CD4-positive, alpha-beta memory T cell (primary cell): ENCODE measurements at regions of chr10 and their contacts with region 1.

Region 1: GRCh38 chr10:93288654-93289634 is 193.2 kb downstream of the MYOF start:
- DNase-seq: peak; percentile 33 to 43 (median 41)
- H3K4me3 ChIP-seq: no peak overlapping the region
- H3K4me3 Mint-ChIP-seq: no peak overlapping the region
- H3K27ac ChIP-seq: no peak overlapping the region
- H3K27ac Mint-ChIP-seq: no peak overlapping the region
- H3K4me1 ChIP-seq: no peaks in the 10 kb centered on the region
- H3K4me1 Mint-ChIP-seq: no peaks in the 10 kb centered on the region
- H3K27me3 ChIP-seq: no peaks in the 10 kb centered on the region
- H3K27me3 Mint-ChIP-seq: no peaks in the 10 kb centered on the region

Region 2: GRCh38 chr10:92965314-92965713 is 323.6 kb before region 1 on chr10:
- CTCF ChIA-PET with region 1: no interaction called
- POLR2A ChIA-PET with region 1: no interaction called
- intact Hi-C with region 1: loop called (anchors 5 kb)
- DNase-seq: peak in 4 of 5 donors; percentile 14 to 26 (median 18)
- H3K4me3 ChIP-seq: no peak overlapping the region
- H3K4me3 Mint-ChIP-seq: no peak overlapping the region
- H3K27ac ChIP-seq: no peak overlapping the region
- H3K27ac Mint-ChIP-seq: no peak overlapping the region
- H3K4me1 ChIP-seq: no peaks in the 10 kb centered on the region
- H3K4me1 Mint-ChIP-seq: no peaks in the 10 kb centered on the region
- H3K27me3 ChIP-seq: no peaks in the 10 kb centered on the region
- H3K27me3 Mint-ChIP-seq: no peaks in the 10 kb centered on the region